ENCODE measurements at regions of chrX and their contacts with region 1.

Region 1: GRCh38 chrX:44872817-44873414 is at the start of gene KDM6A:
- DNase-seq: peak; percentile 85 to 99 (median 98)
- ATAC-seq: peak; percentile 94
- H3K4me3 ChIP-seq: peak within 1 kb of the TSS; percentile 89
- H3K4me3 Mint-ChIP-seq: peak within 1 kb of the TSS; percentile 87 to 100 (median 96)
- H3K27ac ChIP-seq: peak within 1 kb of the TSS; percentile 100
- H3K27ac Mint-ChIP-seq: peak within 1 kb of the TSS; percentile 90 to 100 (median 97)
- H3K4me1 ChIP-seq: peaks cover 14 to 15% of the 10 kb centered on the region in 2 donors
- H3K4me1 Mint-ChIP-seq: peaks cover 0 to 46% (median 27%) of the 10 kb centered on the region in 7 donors
- H3K27me3 ChIP-seq: no peaks in the 10 kb centered on the region
- H3K27me3 Mint-ChIP-seq: no peaks in the 10 kb centered on the region
- total RNA-seq, gene KDM6A: 27.8 to 55.6 (median 47.5) TPM

Region 2: GRCh38 chrX:43878883-43879526 is 993.9 kb before region 1 on chrX:
- CTCF ChIA-PET with region 1: no interaction called
- POLR2A ChIA-PET with region 1: no interaction called
- intact Hi-C with region 1: no loop called
- DNase-seq: no peak
- ATAC-seq: no peak
- H3K4me3 ChIP-seq: no peak overlapping the region
- H3K4me3 Mint-ChIP-seq: no peak overlapping the region
- H3K27ac ChIP-seq: no peak overlapping the region
- H3K27ac Mint-ChIP-seq: no peak overlapping the region
- H3K4me1 ChIP-seq: no peaks in the 10 kb centered on the region
- H3K4me1 Mint-ChIP-seq: peaks cover 0 to 4% (median 0%) of the 10 kb centered on the region in 7 donors
- H3K27me3 ChIP-seq: no peaks in the 10 kb centered on the region
- H3K27me3 Mint-ChIP-seq: peaks cover 11 to 22% (median 15%) of the 10 kb centered on the region in 5 donors

Region 3: DNA sequence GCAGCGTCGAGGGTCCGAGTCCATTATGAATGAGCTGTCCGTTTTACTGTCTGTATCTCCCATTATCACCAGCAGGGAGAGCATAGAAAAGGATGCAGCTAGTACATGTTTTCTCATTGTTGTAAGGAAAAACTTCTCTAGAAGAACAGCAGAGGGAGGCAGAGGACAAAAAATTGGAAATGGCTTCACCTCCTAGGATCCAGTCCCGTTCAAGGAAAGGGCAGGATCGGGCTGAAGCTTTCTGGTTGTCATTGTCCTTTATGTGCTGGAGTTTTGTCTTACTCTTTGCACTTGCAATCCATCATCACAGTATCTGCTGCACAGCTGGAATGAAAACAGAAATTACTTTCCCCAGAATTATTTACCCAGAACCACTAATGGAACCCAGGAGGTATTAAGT is 914.4 kb before region 1 on chrX:
- CTCF ChIA-PET with region 1: no interaction called
- POLR2A ChIA-PET with region 1: no interaction called
- intact Hi-C with region 1: loop called in 1 of 2 experiments (anchors 5 kb)
- DNase-seq: peak in 7 of 9 donors; percentile 18 to 58 (median 36)
- ATAC-seq: peak; percentile 74
- H3K4me3 ChIP-seq: no peak overlapping the region
- H3K4me3 Mint-ChIP-seq: peak overlapping the region in 1 of 10 donors; percentile 44
- H3K27ac ChIP-seq: no peak overlapping the region
- H3K27ac Mint-ChIP-seq: peak overlapping the region in 3 of 9 donors; percentile 6 to 29 (median 24)
- H3K4me1 ChIP-seq: no peaks in the 10 kb centered on the region
- H3K4me1 Mint-ChIP-seq: peaks cover 0 to 6% (median 5%) of the 10 kb centered on the region in 7 donors
- H3K27me3 ChIP-seq: no peaks in the 10 kb centered on the region
- H3K27me3 Mint-ChIP-seq: peaks cover 0 to 5% (median 0%) of the 10 kb centered on the region in 5 donors

Region 4: DNA sequence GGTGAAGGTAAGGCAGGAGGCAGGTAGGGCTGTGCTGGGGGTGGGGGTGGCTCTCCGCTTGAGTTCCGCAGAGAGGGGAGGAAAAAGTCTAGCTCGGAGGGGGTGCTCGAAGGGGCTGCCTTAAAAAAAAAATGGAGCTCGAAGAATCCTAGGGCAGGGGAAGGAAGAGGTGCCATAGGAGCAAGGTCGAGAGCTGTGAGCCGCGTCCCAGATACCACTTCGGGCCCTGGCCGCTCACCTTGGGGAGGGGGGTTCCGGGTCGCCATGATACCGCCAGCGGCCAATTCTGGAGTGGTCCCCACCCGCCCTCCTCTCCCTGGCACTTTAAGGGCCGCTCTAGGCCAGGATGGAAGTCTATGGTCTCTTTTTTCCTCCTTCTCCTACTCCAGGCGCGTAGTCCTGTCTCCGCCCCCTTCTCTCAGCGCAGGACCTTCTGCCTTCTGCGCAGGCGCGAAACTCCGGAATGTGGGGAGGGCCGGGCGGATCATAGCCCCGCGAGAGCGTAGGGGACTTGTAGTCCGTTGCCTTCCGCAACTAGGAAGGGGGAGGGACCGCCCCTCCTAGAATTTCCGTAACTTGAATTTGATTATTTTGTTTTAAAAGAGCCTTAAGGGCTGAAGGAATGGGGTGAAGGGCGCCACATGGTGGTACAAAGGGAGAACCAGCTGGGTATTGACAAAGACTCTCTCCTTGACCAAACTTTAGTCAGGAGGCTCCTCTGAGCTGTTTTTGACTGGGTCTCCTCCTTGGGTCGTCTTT is 330.2 kb before region 1 on chrX and contains the start of gene FUNDC1:
- CTCF ChIA-PET with region 1: no interaction called
- POLR2A ChIA-PET with region 1: no interaction called
- intact Hi-C with region 1: loop called (anchors 1 to 2 kb)
- DNase-seq: peak; percentile 75 to 93 (median 89)
- ATAC-seq: peak; percentile 98
- H3K4me3 ChIP-seq: peak within 1 kb of the TSS; percentile 79
- H3K4me3 Mint-ChIP-seq: peak within 1 kb of the TSS; percentile 89 to 97 (median 93)
- H3K27ac ChIP-seq: peak within 1 kb of the TSS; percentile 92
- H3K27ac Mint-ChIP-seq: peak within 1 kb of the TSS; percentile 86 to 97 (median 93)
- H3K4me1 ChIP-seq: peaks cover 5 to 12% of the 10 kb centered on the region in 2 donors
- H3K4me1 Mint-ChIP-seq: peaks cover 12 to 54% (median 37%) of the 10 kb centered on the region in 7 donors
- H3K27me3 ChIP-seq: no peaks in the 10 kb centered on the region
- H3K27me3 Mint-ChIP-seq: no peaks in the 10 kb centered on the region
- total RNA-seq, gene FUNDC1: 5.2 to 10.1 (median 9.8) TPM

Region 5: DNA sequence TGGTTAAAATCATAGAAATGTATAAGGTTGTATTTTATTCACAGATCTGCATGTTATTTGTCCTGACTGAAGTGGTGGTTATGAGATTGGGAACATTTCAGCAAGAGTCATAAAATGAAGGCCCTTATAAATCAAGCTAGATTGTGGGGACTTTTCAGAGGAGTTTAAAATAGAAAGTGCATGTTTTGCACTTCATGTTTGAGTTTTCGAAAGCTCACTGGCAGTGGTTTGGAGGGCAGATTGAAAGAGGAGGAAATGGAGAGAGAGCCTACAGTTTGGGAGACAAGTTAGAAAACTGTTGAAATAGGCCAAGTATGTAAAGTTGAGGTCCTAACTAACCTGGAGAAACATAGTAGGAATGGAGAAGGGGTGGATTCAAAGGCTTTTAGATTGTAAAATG is 125.0 kb after region 1 on chrX:
- CTCF ChIA-PET with region 1: no interaction called
- POLR2A ChIA-PET with region 1: no interaction called
- intact Hi-C with region 1: loop called in 1 of 2 experiments (anchors 5 kb)
- DNase-seq: no peak
- ATAC-seq: no peak
- H3K4me3 ChIP-seq: no peak overlapping the region
- H3K4me3 Mint-ChIP-seq: peak overlapping the region in 8 of 10 donors; percentile 11 to 69 (median 45)
- H3K27ac ChIP-seq: no peak overlapping the region
- H3K27ac Mint-ChIP-seq: peak overlapping the region; percentile 18 to 93 (median 70)
- H3K4me1 ChIP-seq: peaks cover 4 to 18% of the 10 kb centered on the region in 2 donors
- H3K4me1 Mint-ChIP-seq: peaks cover 31 to 94% (median 68%) of the 10 kb centered on the region in 7 donors
- H3K27me3 ChIP-seq: no peaks in the 10 kb centered on the region
- H3K27me3 Mint-ChIP-seq: no peaks in the 10 kb centered on the region

Region 6: GRCh38 chrX:45134315-45134731 is 261.4 kb after region 1 on chrX:
- CTCF ChIA-PET with region 1: no interaction called
- POLR2A ChIA-PET with region 1: no interaction called
- intact Hi-C with region 1: loop called in 1 of 2 experiments (anchors 1 kb)
- DNase-seq: no peak
- ATAC-seq: no peak
- H3K4me3 ChIP-seq: no peak overlapping the region
- H3K4me3 Mint-ChIP-seq: no peak overlapping the region
- H3K27ac ChIP-seq: no peak overlapping the region
- H3K27ac Mint-ChIP-seq: peak overlapping the region in 1 of 9 donors; percentile 62
- H3K4me1 ChIP-seq: no peaks in the 10 kb centered on the region
- H3K4me1 Mint-ChIP-seq: no peaks in the 10 kb centered on the region
- H3K27me3 ChIP-seq: no peaks in the 10 kb centered on the region
- H3K27me3 Mint-ChIP-seq: no peaks in the 10 kb centered on the region

Region 7: DNA sequence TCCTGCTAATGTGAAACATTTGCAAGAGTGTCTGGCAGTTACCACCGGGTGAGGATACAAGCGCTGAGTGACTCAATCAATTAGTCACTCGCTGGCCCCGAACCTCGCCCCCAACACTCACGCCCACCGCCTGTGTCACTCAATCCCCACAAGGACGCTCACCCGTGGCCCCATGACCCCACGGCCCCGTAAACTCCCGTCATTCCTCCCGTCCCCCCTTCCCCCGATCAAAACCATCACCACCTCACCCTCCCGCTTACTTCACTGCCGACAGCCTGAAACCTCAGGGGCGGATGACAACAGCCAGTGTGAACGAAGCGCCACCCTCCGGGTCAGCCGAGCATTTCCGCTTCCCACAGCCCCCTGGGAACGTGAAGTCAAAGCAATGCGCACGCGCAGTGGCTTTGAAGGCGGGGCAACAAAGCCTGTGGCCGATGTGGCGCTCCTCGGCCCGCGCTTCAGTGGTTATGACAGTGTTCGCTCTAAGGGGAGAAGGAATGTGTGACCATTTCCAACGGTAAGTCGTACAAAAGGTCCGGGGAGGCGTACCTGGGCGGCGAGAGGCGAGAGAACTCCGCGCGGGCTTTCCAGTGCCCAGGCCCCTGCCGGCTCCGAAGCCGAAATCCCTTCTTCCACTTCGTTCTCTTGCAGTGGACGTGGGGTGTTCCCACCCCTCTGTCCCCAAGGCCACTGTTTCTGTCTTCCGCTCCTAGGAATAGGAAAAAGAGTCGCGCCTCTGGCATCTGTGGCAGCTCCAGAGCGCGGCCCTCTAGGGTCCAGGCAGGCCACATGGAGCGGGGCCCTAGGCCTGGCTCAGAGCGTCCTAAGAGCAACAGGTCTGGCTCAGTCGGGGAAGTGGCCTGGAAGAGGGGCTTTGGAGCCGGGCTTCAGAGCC is 1672.4 kb after region 1 on chrX and contains the start of gene ZNF674:
- CTCF ChIA-PET with region 1: no interaction called
- POLR2A ChIA-PET with region 1: no interaction called
- intact Hi-C with region 1: loop called (anchors 5 to 10 kb)
- DNase-seq: peak; percentile 84 to 93 (median 90)
- ATAC-seq: peak; percentile 97
- H3K4me3 ChIP-seq: peak within 1 kb of the TSS; percentile 81
- H3K4me3 Mint-ChIP-seq: peak within 1 kb of the TSS; percentile 92 to 100 (median 96)
- H3K27ac ChIP-seq: peak within 1 kb of the TSS; percentile 90
- H3K27ac Mint-ChIP-seq: peak within 1 kb of the TSS; percentile 93 to 100 (median 96)
- H3K4me1 ChIP-seq: peaks cover 6 to 18% of the 10 kb centered on the region in 2 donors
- H3K4me1 Mint-ChIP-seq: peaks cover 0 to 29% (median 25%) of the 10 kb centered on the region in 7 donors
- H3K27me3 ChIP-seq: no peaks in the 10 kb centered on the region
- H3K27me3 Mint-ChIP-seq: no peaks in the 10 kb centered on the region
- total RNA-seq, gene ZNF674: 2.1 to 6.9 (median 5.8) TPM

Measured in naive thymus-derived CD4-positive, alpha-beta T cell (primary cell).